ENCODE measurements at regions of chr6 and their contacts with region 1.

Region 1: DNA sequence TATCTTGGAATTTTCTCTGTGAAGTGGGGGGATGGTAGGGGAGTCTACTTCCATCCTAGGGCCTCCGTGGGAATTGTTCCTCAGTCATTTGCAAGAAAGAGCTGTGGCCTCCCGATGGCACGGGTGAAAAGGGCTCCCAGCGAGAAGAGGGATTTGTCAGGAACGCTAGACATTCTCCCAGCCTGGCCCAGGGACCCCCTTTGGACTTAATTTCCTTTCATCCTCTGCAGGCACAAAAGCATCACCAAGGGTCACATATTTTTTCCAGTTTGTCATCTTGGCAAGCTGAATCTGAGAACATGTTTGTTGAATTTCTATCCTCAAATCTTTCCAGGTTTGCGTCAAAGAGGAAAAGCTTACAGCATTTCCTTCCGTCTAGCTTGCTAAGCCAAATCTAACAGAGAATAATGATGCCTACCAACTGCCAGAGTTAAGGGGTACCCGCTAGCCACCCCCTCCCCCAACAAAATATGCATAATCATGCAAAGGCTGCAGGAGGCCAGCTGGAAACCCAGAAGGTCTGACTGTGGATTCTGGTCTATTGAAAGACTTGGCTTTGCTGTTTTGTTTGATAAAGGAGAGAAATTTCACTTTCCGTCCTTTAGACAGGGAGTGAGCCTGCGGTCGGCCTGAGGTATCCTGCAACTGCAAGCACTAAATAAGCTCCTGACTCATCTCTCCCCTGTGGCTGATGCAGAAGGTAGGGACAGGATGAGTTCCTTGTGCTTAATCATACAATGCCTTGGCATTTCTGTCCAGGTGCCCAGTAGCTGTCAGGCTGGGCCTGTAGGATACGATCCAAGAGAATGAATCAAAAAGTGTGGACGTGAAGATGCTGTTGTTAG is 23.1 kb downstream of the PSMG4 start:
- DNase-seq: no peak
- H3K4me3 ChIP-seq: no peak overlapping the region
- H3K4me3 Mint-ChIP-seq: no peak overlapping the region
- H3K27ac ChIP-seq: no peak overlapping the region
- H3K27ac Mint-ChIP-seq: peak overlapping the region in 2 of 7 donors; percentile 8 to 10
- H3K4me1 ChIP-seq: peaks cover 3% of the 10 kb centered on the region
- H3K4me1 Mint-ChIP-seq: peaks cover 4 to 8% (median 6%) of the 10 kb centered on the region in 4 donors
- H3K27me3 ChIP-seq: no peaks in the 10 kb centered on the region
- H3K27me3 Mint-ChIP-seq: no peaks in the 10 kb centered on the region

Region 2: DNA sequence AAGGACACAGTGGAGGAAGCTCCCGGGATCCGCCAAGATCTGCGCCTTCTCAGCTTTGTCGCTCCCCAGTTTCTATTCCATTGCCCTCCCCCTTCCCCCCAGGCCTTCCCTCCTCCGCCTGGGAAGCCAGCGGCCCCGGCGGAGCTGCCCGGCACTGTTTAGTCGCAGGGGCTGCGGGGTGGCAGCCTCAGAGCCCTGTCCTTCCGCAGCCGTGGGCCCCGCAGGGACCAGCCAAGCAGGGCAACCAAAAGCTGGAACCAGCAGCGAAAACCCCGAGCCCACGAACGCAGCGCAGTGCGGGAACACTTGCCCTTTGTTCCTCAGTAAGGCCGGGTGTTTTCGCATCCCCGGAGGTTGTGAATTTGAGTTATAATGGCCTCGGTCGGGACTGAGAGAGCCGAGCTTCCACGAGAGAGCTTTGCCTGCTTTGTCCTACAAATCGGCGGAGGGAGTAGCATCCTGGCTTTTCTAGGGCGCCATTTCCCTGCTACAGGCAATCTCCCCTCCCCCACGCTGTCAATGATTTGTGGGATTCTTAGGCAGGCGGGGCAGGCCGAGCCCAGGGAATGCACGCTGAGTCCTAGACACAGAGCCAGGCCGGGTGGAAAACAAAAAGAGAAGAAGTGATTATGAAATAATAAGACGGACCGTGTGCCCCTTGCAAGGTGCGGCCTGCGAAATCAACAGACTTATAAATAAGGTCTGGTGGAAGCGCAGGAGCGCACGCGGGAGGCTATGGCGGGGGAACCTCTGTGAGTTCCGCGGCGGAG is 50.4 kb before region 1 on chr6:
- CTCF ChIA-PET with region 1: no interaction called
- POLR2A ChIA-PET with region 1: no interaction called
- intact Hi-C with region 1: no loop called
- DNase-seq: no peak
- H3K4me3 ChIP-seq: peak overlapping the region in 1 of 2 donors; percentile 5
- H3K4me3 Mint-ChIP-seq: peak overlapping the region; percentile 6 to 91 (median 64)
- H3K27ac ChIP-seq: no peak overlapping the region
- H3K27ac Mint-ChIP-seq: peak overlapping the region in 3 of 7 donors; percentile 34 to 45 (median 41)
- H3K4me1 ChIP-seq: peaks cover 55% of the 10 kb centered on the region
- H3K4me1 Mint-ChIP-seq: peaks cover 27 to 57% (median 47%) of the 10 kb centered on the region in 4 donors
- H3K27me3 ChIP-seq: peaks cover 57% of the 10 kb centered on the region
- H3K27me3 Mint-ChIP-seq: peaks cover 62 to 74% of the 10 kb centered on the region in 2 donors

Region 3: DNA sequence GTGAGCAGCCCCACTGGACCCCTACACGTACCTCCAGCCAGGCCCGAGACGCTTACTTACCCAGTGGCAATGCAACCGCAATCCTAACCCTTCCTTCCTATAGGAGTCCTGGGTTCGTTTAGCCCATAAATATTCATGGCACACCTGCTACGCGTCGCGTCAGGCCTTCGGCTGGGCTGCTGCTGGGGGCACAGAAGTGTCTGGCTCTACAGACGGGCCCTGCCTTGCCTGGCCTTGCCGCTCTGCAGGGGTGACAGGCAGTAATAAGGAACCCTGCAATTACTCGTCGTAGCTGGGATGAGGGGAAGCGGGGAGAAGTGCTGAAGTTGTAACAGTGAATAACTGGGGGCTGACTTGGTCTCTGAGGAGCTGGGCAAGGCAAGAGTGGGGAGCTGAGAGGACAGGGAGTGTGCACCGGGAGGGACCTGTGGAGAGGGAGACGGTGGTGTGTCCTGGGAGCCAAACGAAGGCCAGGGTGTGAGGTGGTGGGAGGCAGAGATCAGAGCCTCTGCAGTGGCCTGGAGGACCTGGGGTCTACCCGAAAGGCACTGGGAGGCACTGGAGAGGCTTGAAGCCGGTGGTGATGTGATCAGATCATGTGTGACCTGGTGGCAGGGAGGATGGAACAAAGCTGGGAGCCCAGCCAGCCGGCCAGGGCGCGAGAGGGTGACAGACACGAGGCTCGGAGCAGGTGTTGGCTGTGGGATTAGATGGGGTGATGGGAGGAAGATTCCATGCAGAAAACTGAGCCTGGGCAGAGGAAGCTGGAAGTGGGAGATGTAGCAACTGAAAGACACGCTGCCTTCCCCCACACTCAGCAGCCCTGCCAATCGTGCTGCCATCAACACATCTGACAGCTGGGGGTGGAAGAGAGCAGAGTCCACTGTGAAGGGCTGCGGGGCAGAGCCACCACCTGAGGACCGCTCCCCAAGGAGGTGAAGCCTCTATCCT is 13.3 kb after region 1 on chr6:
- CTCF ChIA-PET with region 1: interaction called, 15 read pairs
- POLR2A ChIA-PET with region 1: no interaction called
- intact Hi-C with region 1: no loop called
- DNase-seq: no peak
- H3K4me3 ChIP-seq: no peak overlapping the region
- H3K4me3 Mint-ChIP-seq: no peak overlapping the region
- H3K27ac ChIP-seq: no peak overlapping the region
- H3K27ac Mint-ChIP-seq: no peak overlapping the region
- H3K4me1 ChIP-seq: no peaks in the 10 kb centered on the region
- H3K4me1 Mint-ChIP-seq: no peaks in the 10 kb centered on the region
- H3K27me3 ChIP-seq: no peaks in the 10 kb centered on the region
- H3K27me3 Mint-ChIP-seq: no peaks in the 10 kb centered on the region

Region 4: DNA sequence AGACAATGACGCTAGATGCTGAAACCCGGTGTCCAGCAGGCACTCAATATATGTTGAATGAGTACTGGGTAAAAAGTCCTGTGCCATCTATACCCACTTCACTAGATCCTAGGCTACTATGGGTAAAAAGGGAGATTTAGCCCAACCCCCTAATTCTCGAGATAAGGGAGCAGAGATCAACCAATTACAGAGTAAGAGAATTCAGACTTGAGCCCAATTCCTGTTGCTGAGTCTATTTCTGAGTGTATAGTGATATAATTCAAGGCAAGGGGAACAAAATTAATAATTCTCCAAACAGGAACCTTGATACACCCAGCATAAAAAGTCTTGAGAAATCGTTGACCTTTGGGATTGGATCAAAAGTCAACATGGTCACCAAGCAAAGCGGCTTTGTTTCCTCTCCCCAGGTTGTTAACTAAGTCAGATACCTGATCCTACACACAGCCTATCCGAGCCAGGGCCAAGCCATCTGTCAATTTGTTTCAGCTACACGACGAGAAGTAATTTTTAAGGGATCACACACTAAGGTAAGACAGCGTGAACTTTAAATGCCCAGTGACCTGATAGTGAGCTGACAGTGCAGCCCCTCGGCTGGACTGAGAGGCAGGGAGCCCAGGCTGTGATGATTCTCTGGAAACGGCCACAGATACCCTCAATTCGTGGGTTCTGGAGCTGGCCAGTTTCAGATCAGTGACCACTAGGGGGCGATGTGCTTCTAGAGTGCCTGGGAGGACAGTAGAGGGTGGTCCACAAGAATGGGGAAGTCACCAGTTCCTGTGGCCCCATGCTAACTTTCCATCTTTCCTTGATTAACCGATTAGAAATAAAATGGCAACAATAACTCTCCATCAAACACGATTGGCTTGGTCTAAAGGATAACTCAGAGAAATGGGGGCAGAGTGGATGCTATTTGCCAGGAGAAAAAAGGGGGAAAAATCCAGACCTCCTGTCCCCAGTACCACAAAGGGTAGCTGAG is 128.8 kb after region 1 on chr6:
- CTCF ChIA-PET with region 1: interaction called, 3 read pairs
- POLR2A ChIA-PET with region 1: no interaction called
- intact Hi-C with region 1: loop called (anchors 2 kb)
- DNase-seq: peak; percentile 41 to 59 (median 54)
- H3K4me3 ChIP-seq: no peak overlapping the region
- H3K4me3 Mint-ChIP-seq: no peak overlapping the region
- H3K27ac ChIP-seq: no peak overlapping the region
- H3K27ac Mint-ChIP-seq: peak overlapping the region in 4 of 7 donors; percentile 47 to 81 (median 76)
- H3K4me1 ChIP-seq: peaks cover 11% of the 10 kb centered on the region
- H3K4me1 Mint-ChIP-seq: peaks cover 10 to 18% (median 16%) of the 10 kb centered on the region in 4 donors
- H3K27me3 ChIP-seq: no peaks in the 10 kb centered on the region
- H3K27me3 Mint-ChIP-seq: no peaks in the 10 kb centered on the region

Region 5: GRCh38 chr6:3510178-3510976 is 228.5 kb after region 1 on chr6:
- CTCF ChIA-PET with region 1: interaction called, 13 read pairs
- POLR2A ChIA-PET with region 1: no interaction called
- intact Hi-C with region 1: loop called (anchors 1 kb)
- DNase-seq: no peak
- H3K4me3 ChIP-seq: no peak overlapping the region
- H3K4me3 Mint-ChIP-seq: no peak overlapping the region
- H3K27ac ChIP-seq: no peak overlapping the region
- H3K27ac Mint-ChIP-seq: no peak overlapping the region
- H3K4me1 ChIP-seq: no peaks in the 10 kb centered on the region
- H3K4me1 Mint-ChIP-seq: no peaks in the 10 kb centered on the region
- H3K27me3 ChIP-seq: peaks cover 4% of the 10 kb centered on the region
- H3K27me3 Mint-ChIP-seq: peaks cover 14 to 25% of the 10 kb centered on the region in 2 donors

Measured in CD4-positive, alpha-beta memory T cell (primary cell).